B cell (primary cell): ENCODE measurements at regions of chr22 and their contacts with region 1.

Region 1: GRCh38 chr22:36454916-36455570 is 26.4 kb downstream of the TXN2 start:
- DNase-seq: peak; percentile 96
- ATAC-seq: peak; percentile 62
- H3K4me3 ChIP-seq: peak overlapping the region; percentile 18 to 59 (median 54)
- H3K4me3 Mint-ChIP-seq: peak overlapping the region; percentile 77
- H3K27ac ChIP-seq: peak overlapping the region; percentile 84 to 93
- H3K27ac Mint-ChIP-seq: peak overlapping the region; percentile 91
- H3K4me1 ChIP-seq: peaks cover 50 to 60% of the 10 kb centered on the region in 2 donors
- H3K4me1 Mint-ChIP-seq: peaks cover 45% of the 10 kb centered on the region
- H3K27me3 ChIP-seq: no peaks in the 10 kb centered on the region
- H3K27me3 Mint-ChIP-seq: no peaks in the 10 kb centered on the region
- CTCF ChIP-seq: no peak

Region 2: GRCh38 chr22:36443198-36443770 is 11.8 kb before region 1 on chr22:
- CTCF ChIA-PET with region 1: interaction called, 3 read pairs
- POLR2A ChIA-PET with region 1: interaction called, 11 read pairs
- intact Hi-C with region 1: no loop called
- DNase-seq: peak; percentile 69
- ATAC-seq: peak; percentile 68
- H3K4me3 ChIP-seq: no peak overlapping the region
- H3K4me3 Mint-ChIP-seq: peak overlapping the region; percentile 57
- H3K27ac ChIP-seq: no peak overlapping the region
- H3K27ac Mint-ChIP-seq: peak overlapping the region; percentile 53
- H3K4me1 ChIP-seq: peaks cover 31 to 48% of the 10 kb centered on the region in 2 donors
- H3K4me1 Mint-ChIP-seq: peaks cover 38% of the 10 kb centered on the region
- H3K27me3 ChIP-seq: no peaks in the 10 kb centered on the region
- H3K27me3 Mint-ChIP-seq: no peaks in the 10 kb centered on the region
- CTCF ChIP-seq: no peak

Region 3: DNA sequence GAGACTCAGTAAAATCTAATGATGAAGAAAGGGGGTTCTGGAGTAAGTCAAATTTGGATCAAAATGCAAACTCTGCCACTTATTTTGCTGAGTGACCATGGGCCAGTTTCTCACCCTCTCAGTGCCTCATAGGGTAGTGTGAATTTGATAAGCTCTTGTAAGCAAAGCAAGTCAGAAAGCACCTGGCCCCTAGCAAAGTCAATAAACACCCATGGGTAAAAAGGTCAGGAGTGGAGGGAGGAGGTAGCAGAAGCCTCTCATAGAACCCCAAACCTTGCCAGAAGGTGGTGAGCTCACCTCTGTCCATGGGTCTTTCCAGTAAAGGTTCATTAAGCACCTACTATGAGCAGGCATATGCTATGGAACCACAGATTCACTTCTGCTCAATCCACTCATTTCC is 267.0 kb after region 1 on chr22:
- CTCF ChIA-PET with region 1: no interaction called
- POLR2A ChIA-PET with region 1: no interaction called
- intact Hi-C with region 1: no loop called
- DNase-seq: no peak
- ATAC-seq: no peak
- H3K4me3 ChIP-seq: no peak overlapping the region
- H3K4me3 Mint-ChIP-seq: no peak overlapping the region
- H3K27ac ChIP-seq: no peak overlapping the region
- H3K27ac Mint-ChIP-seq: no peak overlapping the region
- H3K4me1 ChIP-seq: no peaks in the 10 kb centered on the region
- H3K4me1 Mint-ChIP-seq: no peaks in the 10 kb centered on the region
- H3K27me3 ChIP-seq: peaks cover 0 to 20% (median 8%) of the 10 kb centered on the region in 4 experiments
- H3K27me3 Mint-ChIP-seq: peaks cover 53% of the 10 kb centered on the region
- CTCF ChIP-seq: no peak

Region 4: GRCh38 chr22:36734171-36735058 is 279.4 kb after region 1 on chr22:
- CTCF ChIA-PET with region 1: no interaction called
- POLR2A ChIA-PET with region 1: no interaction called
- intact Hi-C with region 1: no loop called
- DNase-seq: no peak
- ATAC-seq: no peak
- H3K4me3 ChIP-seq: no peak overlapping the region
- H3K4me3 Mint-ChIP-seq: no peak overlapping the region
- H3K27ac ChIP-seq: no peak overlapping the region
- H3K27ac Mint-ChIP-seq: no peak overlapping the region
- H3K4me1 ChIP-seq: no peaks in the 10 kb centered on the region
- H3K4me1 Mint-ChIP-seq: no peaks in the 10 kb centered on the region
- H3K27me3 ChIP-seq: peaks cover 0 to 22% (median 3%) of the 10 kb centered on the region in 4 experiments
- H3K27me3 Mint-ChIP-seq: peaks cover 72% of the 10 kb centered on the region
- CTCF ChIP-seq: no peak